GM12878 (cell line): ENCODE measurements at regions of chr15 and their contacts with region 1.

Region 1: GRCh38 chr15:64010719-64011118 is 35.6 kb downstream of the DAPK2 start:
- DNase-seq: peak; percentile 96
- ATAC-seq: peak; percentile 98
- H3K4me3 ChIP-seq: no peak overlapping the region
- H3K27ac ChIP-seq: peak overlapping the region; percentile 76
- H3K4me1 ChIP-seq: peaks cover 32% of the 10 kb centered on the region
- H3K27me3 ChIP-seq: no peaks in the 10 kb centered on the region
- CTCF ChIP-seq: peak; percentile 36 to 71 (median 54)
- EP300 ChIP-seq: peak; percentile 61 to 78; a peak in 2 of 4 replicates
- POLR2A ChIP-seq: no peak
- RAD21 ChIP-seq: peak; percentile 77

Region 2: DNA sequence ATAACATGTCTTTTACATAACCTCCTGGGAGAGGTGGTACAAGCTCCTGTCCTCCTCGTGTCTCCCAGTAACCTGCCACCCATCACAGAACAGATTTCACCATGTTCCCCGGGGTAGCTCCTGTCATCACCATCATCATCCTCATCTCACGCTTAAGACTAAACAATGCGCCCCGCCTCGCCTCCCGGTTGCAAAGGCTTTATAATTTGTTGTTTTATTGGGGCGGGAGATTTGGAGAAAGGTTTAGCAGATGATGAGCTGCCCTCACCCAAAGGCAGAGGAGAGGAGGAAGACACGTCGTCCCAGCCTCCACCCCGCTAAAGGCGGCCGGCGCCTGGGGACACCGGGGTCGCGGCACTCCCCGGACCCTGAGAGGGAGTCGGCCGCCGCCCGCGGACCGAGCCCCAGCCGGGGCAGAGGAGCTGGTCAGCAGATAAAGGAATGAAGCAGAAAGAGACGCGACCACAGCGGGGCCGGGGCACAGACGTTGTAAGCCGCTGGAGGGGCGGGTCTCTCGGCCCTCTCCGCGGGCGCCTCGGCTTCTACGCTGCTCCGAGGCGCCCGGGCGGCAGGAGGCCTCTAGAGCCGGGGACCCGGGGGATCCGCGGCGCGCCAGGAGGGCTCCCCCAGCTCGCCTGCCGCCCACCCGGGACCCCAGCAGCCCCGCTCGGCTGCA is 177.6 kb before region 1 on chr15:
- CTCF ChIA-PET with region 1: interaction called, 17 read pairs
- POLR2A ChIA-PET with region 1: interaction called, 3 read pairs
- RAD21 ChIA-PET with region 1: interaction called, 4 read pairs
- SMC1A ChIA-PET with region 1: interaction called, 11 read pairs
- in situ Hi-C with region 1: no loop called
- intact Hi-C with region 1: no loop called
- DNase-seq: no peak
- ATAC-seq: peak; percentile 68
- H3K4me3 ChIP-seq: peak overlapping the region; percentile 99
- H3K27ac ChIP-seq: peak overlapping the region; percentile 99
- H3K4me1 ChIP-seq: peaks cover 10% of the 10 kb centered on the region
- H3K27me3 ChIP-seq: no peaks in the 10 kb centered on the region
- CTCF ChIP-seq: no peak
- EP300 ChIP-seq: no peak
- POLR2A ChIP-seq: no peak
- RAD21 ChIP-seq: no peak

Region 3: GRCh38 chr15:63896336-63897115 is 114.2 kb before region 1 on chr15:
- CTCF ChIA-PET with region 1: interaction called, 46 read pairs
- POLR2A ChIA-PET with region 1: interaction called, 7 read pairs
- RAD21 ChIA-PET with region 1: interaction called, 46 read pairs
- SMC1A ChIA-PET with region 1: interaction called, 57 read pairs
- in situ Hi-C with region 1: no loop called
- intact Hi-C with region 1: no loop called
- DNase-seq: peak; percentile 90
- ATAC-seq: peak; percentile 84
- H3K4me3 ChIP-seq: no peak overlapping the region
- H3K27ac ChIP-seq: peak overlapping the region; percentile 84
- H3K4me1 ChIP-seq: peaks cover 59% of the 10 kb centered on the region
- H3K27me3 ChIP-seq: no peaks in the 10 kb centered on the region
- CTCF ChIP-seq: no peak
- EP300 ChIP-seq: peak; percentile 93 to 95
- POLR2A ChIP-seq: no peak
- RAD21 ChIP-seq: no peak

Region 4: GRCh38 chr15:63986751-63987341 is 23.9 kb before region 1 on chr15:
- CTCF ChIA-PET with region 1: interaction called, 61 read pairs
- POLR2A ChIA-PET with region 1: interaction called, 21 read pairs
- RAD21 ChIA-PET with region 1: interaction called, 48 read pairs
- SMC1A ChIA-PET with region 1: interaction called, 66 read pairs
- in situ Hi-C with region 1: no loop called
- intact Hi-C with region 1: loop called (anchors 1 kb)
- DNase-seq: peak; percentile 96
- ATAC-seq: peak; percentile 83
- H3K4me3 ChIP-seq: peak overlapping the region; percentile 1; the same call in 1 of the 2 replicates
- H3K27ac ChIP-seq: peak overlapping the region; percentile 92
- H3K4me1 ChIP-seq: peaks cover 77% of the 10 kb centered on the region
- H3K27me3 ChIP-seq: no peaks in the 10 kb centered on the region
- CTCF ChIP-seq: peak in 1 of 3 experiments; percentile 36; a peak in 2 of 6 replicates
- EP300 ChIP-seq: peak in 1 of 2 experiments; percentile 61; a peak in 2 of 4 replicates
- POLR2A ChIP-seq: no peak
- RAD21 ChIP-seq: peak; percentile 52

Region 5: DNA sequence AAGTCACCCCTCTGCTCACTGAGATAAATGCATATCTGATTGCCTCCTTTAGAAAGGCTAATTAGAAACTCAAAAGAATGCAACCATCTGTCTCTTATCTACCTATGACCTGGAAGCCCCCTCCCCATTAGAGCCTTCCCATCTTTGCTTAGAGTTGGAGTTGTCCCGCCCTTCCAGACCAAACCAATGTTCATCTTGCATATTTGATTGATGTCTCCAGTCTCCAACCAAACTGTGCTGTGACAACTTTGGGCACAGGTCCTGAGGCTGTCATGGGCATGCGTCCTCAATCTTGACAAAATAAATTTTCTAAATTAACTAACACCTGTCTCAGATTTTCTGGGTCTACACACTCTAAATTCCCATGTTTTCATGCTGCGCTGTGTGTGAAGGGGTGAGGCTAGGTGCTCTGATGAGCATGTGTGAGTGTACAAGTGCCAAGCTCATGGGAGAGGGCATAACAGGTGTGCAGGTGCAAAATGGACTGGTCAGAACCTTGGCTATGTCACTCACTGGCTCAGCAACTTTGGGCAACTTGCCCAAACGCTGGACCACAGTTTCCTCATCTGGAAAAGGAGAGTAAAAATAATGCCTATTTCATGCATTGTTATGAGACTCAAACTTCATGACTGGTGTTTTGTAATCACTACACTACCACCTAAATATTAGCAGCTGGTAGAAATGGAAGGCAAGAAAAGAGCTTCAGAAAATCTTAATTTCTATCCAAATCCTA is 28.3 kb after region 1 on chr15:
- CTCF ChIA-PET with region 1: interaction called, 40 read pairs
- POLR2A ChIA-PET with region 1: interaction called, 6 read pairs
- RAD21 ChIA-PET with region 1: interaction called, 50 read pairs
- SMC1A ChIA-PET with region 1: interaction called, 29 read pairs
- in situ Hi-C with region 1: no loop called
- intact Hi-C with region 1: loop called (anchors 2 kb)
- DNase-seq: no peak
- ATAC-seq: no peak
- H3K4me3 ChIP-seq: no peak overlapping the region
- H3K27ac ChIP-seq: no peak overlapping the region
- H3K4me1 ChIP-seq: peaks cover 3% of the 10 kb centered on the region
- H3K27me3 ChIP-seq: no peaks in the 10 kb centered on the region
- CTCF ChIP-seq: no peak
- EP300 ChIP-seq: no peak
- POLR2A ChIP-seq: no peak
- RAD21 ChIP-seq: no peak

Region 6: DNA sequence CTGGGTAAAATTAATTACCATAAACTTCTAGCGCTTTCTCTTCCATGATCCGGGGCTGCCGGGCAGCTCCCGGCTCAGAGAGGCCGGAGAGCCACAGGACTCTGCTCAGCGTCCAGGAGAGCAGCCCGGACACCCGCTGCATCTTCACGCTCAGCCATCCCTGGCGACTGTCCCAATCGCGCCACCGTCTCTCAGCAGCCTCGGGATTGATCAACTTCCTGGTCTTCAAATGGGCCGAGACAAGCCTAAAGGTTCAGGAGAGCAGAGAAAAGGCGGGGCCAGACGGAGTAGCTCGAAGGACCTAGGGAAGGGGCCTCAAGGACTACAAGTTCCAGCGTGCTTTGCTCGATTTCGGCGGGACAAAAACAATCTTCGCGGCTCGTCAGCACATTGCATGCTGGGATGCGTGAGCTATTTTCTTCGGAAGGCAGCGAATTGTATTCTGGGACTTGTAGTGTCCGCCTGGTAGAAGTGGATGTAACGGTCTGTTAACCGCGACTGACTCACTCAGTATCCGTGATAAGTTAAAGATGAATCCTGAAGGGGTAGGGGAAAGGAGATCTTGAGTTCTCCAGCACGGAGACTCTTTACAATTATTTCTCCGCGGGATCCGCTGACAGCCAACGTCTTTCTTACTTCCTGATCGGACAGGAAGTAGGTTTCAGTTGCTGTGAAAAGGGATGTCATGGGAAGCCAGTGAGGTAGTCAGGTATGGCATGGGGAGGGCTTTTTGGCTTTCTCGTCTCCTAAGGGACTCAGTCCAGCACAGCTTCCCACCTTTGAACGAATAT is 83.1 kb after region 1 on chr15 and contains the start of gene CIAO2A:
- CTCF ChIA-PET with region 1: no interaction called
- POLR2A ChIA-PET with region 1: interaction called, 4 read pairs
- RAD21 ChIA-PET with region 1: interaction called, 18 read pairs
- SMC1A ChIA-PET with region 1: interaction called, 4 read pairs
- in situ Hi-C with region 1: no loop called
- intact Hi-C with region 1: no loop called
- DNase-seq: peak; percentile 99
- ATAC-seq: peak; percentile 74
- H3K4me3 ChIP-seq: peak within 1 kb of the TSS; percentile 96
- H3K27ac ChIP-seq: peak within 1 kb of the TSS; percentile 94
- H3K4me1 ChIP-seq: peaks cover 32% of the 10 kb centered on the region
- H3K27me3 ChIP-seq: no peaks in the 10 kb centered on the region
- CTCF ChIP-seq: no peak
- EP300 ChIP-seq: no peak
- POLR2A ChIP-seq: peak; percentile 66; the same call in 1 of the 2 replicates
- RAD21 ChIP-seq: no peak
- polyA plus RNA-seq, gene CIAO2A: 264 to 303 TPM